Prostate gland (tissue), 2 donors: ENCODE measurements at regions of chr12 and their contacts with region 1.

Region 1: DNA sequence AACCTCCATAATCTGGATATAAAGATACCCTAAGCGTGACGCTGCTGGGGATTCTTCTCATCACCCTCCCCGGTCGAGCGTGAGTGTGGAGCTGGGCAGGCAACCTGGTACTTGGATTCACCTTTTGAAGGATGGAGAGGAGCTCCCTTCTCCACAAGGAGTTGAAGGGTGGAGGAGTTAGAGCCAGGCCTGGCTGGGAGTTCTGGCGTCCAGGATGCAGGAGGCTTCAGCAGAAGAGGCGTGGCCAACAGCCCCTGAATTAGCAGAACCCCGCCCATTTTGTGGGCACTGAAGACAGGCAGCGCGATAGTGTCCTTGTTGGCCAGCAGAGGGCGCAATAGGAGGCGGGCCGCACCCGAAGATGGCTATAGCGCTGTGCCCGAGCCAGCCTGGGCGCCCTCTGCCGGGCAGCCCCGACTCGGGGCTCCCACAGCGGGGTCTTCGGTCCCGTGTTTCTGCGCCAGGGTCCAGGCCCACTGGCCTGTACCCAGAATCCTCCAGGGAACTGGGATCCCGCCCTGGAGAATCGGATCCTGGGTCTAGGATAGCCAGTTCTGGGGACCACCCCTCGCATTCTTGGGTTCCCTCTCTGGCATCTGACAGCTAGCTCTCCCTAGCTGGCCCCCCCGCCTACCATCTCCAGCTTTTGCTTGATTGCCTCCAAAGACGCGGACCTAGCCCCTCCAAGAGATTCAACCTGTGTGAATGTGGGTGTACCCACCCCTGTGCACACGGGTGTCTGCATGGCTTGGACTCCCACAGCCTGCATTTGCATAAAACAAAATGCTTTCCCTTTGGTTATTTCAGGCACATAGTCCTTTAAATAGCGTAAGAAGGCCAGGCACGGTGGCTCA is 26.0 kb upstream of the SMUG1 start:
- DNase-seq: peak; percentile 54
- H3K4me3 ChIP-seq: no peak overlapping the region
- H3K27ac ChIP-seq: no peak overlapping the region
- H3K4me1 ChIP-seq: peaks cover 5% of the 10 kb centered on the region
- H3K27me3 ChIP-seq: peaks cover 9% of the 10 kb centered on the region
- CTCF ChIP-seq: peak; percentile 66 to 89 (median 72)
- POLR2A ChIP-seq: no peak

Region 2: GRCh38 chr12:53701518-53702260 is 513.1 kb before region 1 on chr12:
- intact Hi-C with region 1: no loop called
- DNase-seq: peak; percentile 80
- H3K4me3 ChIP-seq: no peak overlapping the region
- H3K27ac ChIP-seq: no peak overlapping the region
- H3K4me1 ChIP-seq: no peaks in the 10 kb centered on the region
- H3K27me3 ChIP-seq: no peaks in the 10 kb centered on the region
- CTCF ChIP-seq: peak; percentile 69 to 94 (median 92)
- POLR2A ChIP-seq: no peak

Region 3: GRCh38 chr12:54324617-54325441 is 110.0 kb after region 1 on chr12 and contains the start of gene COPZ1:
- intact Hi-C with region 1: loop called (anchors 5 kb)
- DNase-seq: peak; percentile 97
- H3K4me3 ChIP-seq: peak within 1 kb of the TSS; percentile 70 to 72
- H3K27ac ChIP-seq: peak within 1 kb of the TSS; percentile 83 to 88
- H3K4me1 ChIP-seq: no peaks in the 10 kb centered on the region
- H3K27me3 ChIP-seq: no peaks in the 10 kb centered on the region
- CTCF ChIP-seq: peak; percentile 58 to 81 (median 71)
- POLR2A ChIP-seq: peak; percentile 80
- total RNA-seq, gene COPZ1: 83.1 to 192 TPM

Region 4: DNA sequence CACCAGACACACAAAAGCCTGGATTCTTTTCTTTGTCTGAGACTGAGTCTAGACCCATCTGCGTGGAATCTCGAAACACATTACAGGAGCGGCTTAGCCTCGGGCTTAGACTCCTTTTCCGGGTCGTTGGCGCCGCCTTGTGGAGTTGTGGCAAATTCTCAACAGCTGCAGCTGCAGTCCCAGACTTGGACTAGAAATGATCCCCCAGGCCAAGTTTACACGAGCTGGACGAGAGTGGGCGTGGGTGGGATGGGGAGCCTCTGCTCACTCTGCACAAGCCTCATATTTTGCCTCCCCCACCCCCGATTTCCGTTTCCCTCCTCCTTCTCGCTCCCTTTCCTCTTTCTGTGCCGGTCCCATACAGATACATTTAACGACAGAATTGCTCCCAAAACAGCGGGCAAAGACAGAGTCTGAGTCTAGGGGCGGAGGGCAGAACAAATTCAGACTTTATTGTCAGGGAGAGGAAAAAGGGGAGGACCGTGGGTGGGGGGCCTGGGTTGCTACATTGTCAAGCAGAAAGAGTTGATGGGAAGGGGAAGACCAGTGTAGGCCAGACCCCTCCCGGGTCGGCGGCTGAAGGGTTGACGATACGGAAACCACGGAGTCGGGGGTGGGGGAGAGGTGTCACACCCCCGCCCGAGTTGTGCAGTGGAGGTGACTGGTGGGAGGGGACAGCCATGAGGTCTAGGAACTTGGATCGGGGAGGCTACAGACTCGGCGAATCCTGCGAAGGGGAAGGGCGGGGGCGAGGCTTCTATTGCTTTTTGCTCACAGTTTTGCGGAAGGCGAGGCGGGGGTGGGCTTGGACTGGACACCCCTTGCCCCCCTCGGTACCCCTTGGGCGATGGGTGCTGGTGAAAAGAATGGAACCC is 154.2 kb after region 1 on chr12:
- intact Hi-C with region 1: loop called (anchors 5 kb)
- DNase-seq: peak; percentile 79
- H3K4me3 ChIP-seq: peak overlapping the region in 1 of 2 donors; percentile 4
- H3K27ac ChIP-seq: no peak overlapping the region
- H3K4me1 ChIP-seq: no peaks in the 10 kb centered on the region
- H3K27me3 ChIP-seq: no peaks in the 10 kb centered on the region
- CTCF ChIP-seq: peak; percentile 56 to 84 (median 70)
- POLR2A ChIP-seq: no peak